Mammary epithelial cell (primary cell): ENCODE measurements at regions of chr3 and their contacts with region 1.

Region 1: DNA sequence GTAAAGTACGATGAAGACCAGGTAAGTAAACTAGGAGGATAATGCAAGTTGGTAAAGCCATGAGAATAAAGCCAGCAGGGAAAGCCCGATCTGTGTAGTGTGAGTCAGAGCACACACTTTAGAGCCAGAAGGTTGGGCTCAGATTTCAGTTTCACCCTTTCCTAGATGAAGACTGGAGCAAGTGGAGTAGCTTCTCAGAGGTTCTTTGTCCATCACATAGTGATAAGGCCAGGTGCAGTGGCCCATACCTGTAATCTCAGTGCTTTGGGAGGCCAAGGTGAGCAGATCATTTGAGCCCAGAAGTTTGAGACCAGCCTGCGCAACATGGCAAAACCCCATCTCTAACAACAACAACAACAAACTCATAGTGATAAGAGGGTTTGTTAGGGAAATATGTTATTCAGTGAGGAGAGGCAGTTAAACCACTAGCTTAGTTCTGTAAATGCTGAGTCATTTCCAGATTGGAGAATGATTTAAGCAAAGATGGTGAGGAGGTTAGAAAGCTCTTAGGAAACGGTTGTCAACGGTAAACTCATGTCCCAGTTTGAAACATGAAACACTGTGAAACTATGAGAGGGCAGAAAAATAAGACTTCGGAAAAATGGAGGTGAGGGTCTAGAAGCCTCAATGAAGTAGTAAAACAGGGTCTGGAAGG is 39.0 kb downstream of the IL12A start:
- DNase-seq: peak; percentile 75
- H3K4me3 ChIP-seq: no peak overlapping the region
- H3K27ac ChIP-seq: no peak overlapping the region
- H3K4me1 ChIP-seq: peaks cover 5% of the 10 kb centered on the region
- H3K27me3 ChIP-seq: no peaks in the 10 kb centered on the region
- CTCF ChIP-seq: no peak

Region 2: DNA sequence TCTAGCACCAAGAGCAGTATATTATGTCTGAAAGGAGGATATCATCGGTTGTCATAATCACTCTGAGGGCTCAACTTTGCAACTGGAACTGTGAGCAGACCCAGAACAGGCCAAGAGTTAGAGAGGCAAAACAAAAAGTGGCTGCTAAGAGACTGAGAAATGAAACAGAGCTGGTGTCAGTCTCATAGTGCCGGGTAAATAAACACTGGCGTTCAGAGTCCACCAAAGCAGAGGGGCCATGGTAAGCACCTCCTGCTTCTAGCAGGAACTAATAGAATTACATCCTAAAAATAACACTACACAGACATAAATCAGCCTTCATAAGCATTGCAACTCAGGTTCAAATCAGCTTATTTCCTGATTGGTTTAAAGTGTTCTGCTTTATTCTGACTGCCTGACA is 49.3 kb before region 1 on chr3:
- CTCF ChIA-PET with region 1: no interaction called
- dilution Hi-C with region 1: no loop called
- in situ Hi-C with region 1: no loop called
- intact Hi-C with region 1: no loop called
- DNase-seq: no peak
- H3K4me3 ChIP-seq: no peak overlapping the region
- H3K27ac ChIP-seq: no peak overlapping the region
- H3K4me1 ChIP-seq: no peaks in the 10 kb centered on the region
- H3K27me3 ChIP-seq: no peaks in the 10 kb centered on the region
- CTCF ChIP-seq: no peak

Region 3: GRCh38 chr3:160052385-160053047 is 24.8 kb after region 1 on chr3:
- CTCF ChIA-PET with region 1: interaction called, 28 read pairs
- dilution Hi-C with region 1: no loop called
- in situ Hi-C with region 1: no loop called
- intact Hi-C with region 1: no loop called
- DNase-seq: no peak
- H3K4me3 ChIP-seq: peak overlapping the region; percentile 17 to 45 (median 43)
- H3K27ac ChIP-seq: no peak overlapping the region
- H3K4me1 ChIP-seq: peaks cover 10% of the 10 kb centered on the region
- H3K27me3 ChIP-seq: no peaks in the 10 kb centered on the region
- CTCF ChIP-seq: no peak

Region 4: GRCh38 chr3:160133757-160134156 is 106.1 kb after region 1 on chr3:
- CTCF ChIA-PET with region 1: no interaction called
- dilution Hi-C with region 1: no loop called
- in situ Hi-C with region 1: no loop called
- intact Hi-C with region 1: loop called (anchors 1 kb)
- DNase-seq: peak; percentile 49
- H3K4me3 ChIP-seq: no peak overlapping the region
- H3K27ac ChIP-seq: no peak overlapping the region
- H3K4me1 ChIP-seq: peaks cover 17% of the 10 kb centered on the region
- H3K27me3 ChIP-seq: no peaks in the 10 kb centered on the region
- CTCF ChIP-seq: peak; percentile 7 to 36

Region 5: DNA sequence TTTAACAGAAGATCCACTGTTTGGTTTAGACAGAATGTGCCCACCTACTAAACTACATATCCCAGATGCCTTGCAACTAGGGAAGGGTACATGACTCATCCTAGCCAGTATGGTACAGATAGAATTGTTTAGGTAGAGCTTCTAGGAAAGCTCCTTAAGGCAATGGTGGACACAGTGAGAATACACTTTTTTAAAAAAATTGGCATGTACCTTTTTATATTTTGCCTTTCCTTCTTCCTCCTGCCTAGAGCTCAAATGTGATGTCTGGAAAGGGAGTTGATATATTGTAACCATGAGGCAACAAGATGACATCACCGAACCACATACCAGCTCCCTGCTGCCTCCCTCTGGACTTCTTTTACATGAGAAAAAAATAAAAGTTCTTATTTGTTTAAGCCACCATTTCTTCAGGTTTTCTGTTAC is 183.1 kb after region 1 on chr3:
- CTCF ChIA-PET with region 1: no interaction called
- dilution Hi-C with region 1: no loop called
- in situ Hi-C with region 1: no loop called
- intact Hi-C with region 1: loop called (anchors 1 kb)
- DNase-seq: peak; percentile 40
- H3K4me3 ChIP-seq: no peak overlapping the region
- H3K27ac ChIP-seq: no peak overlapping the region
- H3K4me1 ChIP-seq: no peaks in the 10 kb centered on the region
- H3K27me3 ChIP-seq: peaks cover 3% of the 10 kb centered on the region
- CTCF ChIP-seq: peak; percentile 28 to 49

Region 6: DNA sequence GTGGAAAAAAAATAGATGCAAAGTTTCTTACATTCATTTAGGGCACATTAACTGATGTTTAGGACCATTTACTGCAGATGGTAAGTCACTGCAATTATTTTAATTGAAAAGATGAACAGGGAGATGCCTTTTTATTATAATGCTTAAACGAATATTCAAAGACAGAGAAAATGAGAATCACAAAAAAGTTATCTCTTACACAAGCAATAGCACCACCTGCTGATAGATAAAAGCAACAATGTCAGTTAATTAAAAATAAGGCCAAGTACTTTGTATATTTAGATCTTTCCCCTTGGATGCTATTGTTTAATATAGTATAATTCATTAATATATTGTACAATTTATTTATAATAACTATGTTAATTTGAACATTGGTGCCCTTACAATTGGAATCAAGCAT is 315.5 kb after region 1 on chr3:
- CTCF ChIA-PET with region 1: no interaction called
- dilution Hi-C with region 1: no loop called
- in situ Hi-C with region 1: loop called (anchors 5 to 10 kb)
- intact Hi-C with region 1: loop called (anchors 1 kb)
- DNase-seq: peak; percentile 4
- H3K4me3 ChIP-seq: no peak overlapping the region
- H3K27ac ChIP-seq: no peak overlapping the region
- H3K4me1 ChIP-seq: no peaks in the 10 kb centered on the region
- H3K27me3 ChIP-seq: no peaks in the 10 kb centered on the region
- CTCF ChIP-seq: peak; percentile 41 to 51